MCF 10A (cell line): ENCODE measurements at regions of chr5 and their contacts with region 1.

Region 1: GRCh38 chr5:169583424-169584204 is at the start of gene SPDL1:
- DNase-seq: peak; percentile 98
- H3K4me3 Mint-ChIP-seq: peak within 1 kb of the TSS; percentile 97
- H3K27ac Mint-ChIP-seq: peak within 1 kb of the TSS; percentile 98
- H3K4me1 Mint-ChIP-seq: peaks cover 30% of the 10 kb centered on the region
- H3K27me3 Mint-ChIP-seq: no peaks in the 10 kb centered on the region
- CTCF ChIP-seq: no peak
- total RNA-seq, gene SPDL1: 40.6 and 51.3 TPM in 2 replicates

Region 2: GRCh38 chr5:168579488-168580226 is 1004.0 kb before region 1 on chr5:
- CTCF ChIA-PET with region 1: no interaction called
- POLR2A ChIA-PET with region 1: no interaction called
- intact Hi-C with region 1: loop called (anchors 5 kb)
- DNase-seq: peak; percentile 100
- H3K4me3 Mint-ChIP-seq: peak overlapping the region; percentile 83
- H3K27ac Mint-ChIP-seq: peak overlapping the region; percentile 96
- H3K4me1 Mint-ChIP-seq: peaks cover 28% of the 10 kb centered on the region
- H3K27me3 Mint-ChIP-seq: no peaks in the 10 kb centered on the region
- CTCF ChIP-seq: no peak

Region 3: GRCh38 chr5:168706655-168707069 is 877.0 kb before region 1 on chr5:
- CTCF ChIA-PET with region 1: interaction called, 29 read pairs
- POLR2A ChIA-PET with region 1: interaction called, 3 read pairs
- intact Hi-C with region 1: loop called (anchors 1 kb)
- DNase-seq: peak; percentile 60
- H3K4me3 Mint-ChIP-seq: no peak overlapping the region
- H3K27ac Mint-ChIP-seq: no peak overlapping the region
- H3K4me1 Mint-ChIP-seq: no peaks in the 10 kb centered on the region
- H3K27me3 Mint-ChIP-seq: no peaks in the 10 kb centered on the region
- CTCF ChIP-seq: peak; percentile 53

Region 4: GRCh38 chr5:169265888-169266287 is 317.7 kb before region 1 on chr5:
- CTCF ChIA-PET with region 1: interaction called, 12 read pairs
- POLR2A ChIA-PET with region 1: no interaction called
- intact Hi-C with region 1: no loop called
- DNase-seq: peak; percentile 50
- H3K4me3 Mint-ChIP-seq: no peak overlapping the region
- H3K27ac Mint-ChIP-seq: no peak overlapping the region
- H3K4me1 Mint-ChIP-seq: no peaks in the 10 kb centered on the region
- H3K27me3 Mint-ChIP-seq: no peaks in the 10 kb centered on the region
- CTCF ChIP-seq: peak; percentile 39

Region 5: DNA sequence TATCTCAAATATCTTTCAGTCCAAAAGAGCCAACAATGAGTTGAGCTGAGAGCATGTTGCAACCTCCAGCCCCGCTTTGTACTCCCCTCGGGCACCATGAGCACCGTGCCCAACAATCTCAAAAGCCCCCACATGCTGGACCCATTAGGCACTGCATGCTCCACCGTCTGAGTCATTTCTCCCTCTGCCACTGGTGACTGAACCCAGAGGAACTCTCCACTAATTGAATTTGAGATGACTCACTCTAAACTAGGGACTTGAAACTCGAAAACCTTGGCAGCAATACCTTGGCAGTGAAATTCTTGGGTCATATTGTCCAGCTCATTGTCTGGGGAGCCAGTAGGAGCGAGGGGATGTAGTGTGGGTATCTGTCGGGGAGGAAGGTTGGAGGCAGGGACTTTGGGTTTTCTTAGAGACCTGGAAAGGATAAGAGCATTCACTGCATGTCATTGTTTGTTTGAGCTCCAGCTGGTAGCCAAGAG is 232.8 kb before region 1 on chr5:
- CTCF ChIA-PET with region 1: interaction called, 3 read pairs
- POLR2A ChIA-PET with region 1: interaction called, 3 read pairs
- intact Hi-C with region 1: loop called (anchors 5 kb)
- DNase-seq: peak; percentile 100
- H3K4me3 Mint-ChIP-seq: peak overlapping the region; percentile 49
- H3K27ac Mint-ChIP-seq: peak overlapping the region; percentile 75
- H3K4me1 Mint-ChIP-seq: peaks cover 53% of the 10 kb centered on the region
- H3K27me3 Mint-ChIP-seq: no peaks in the 10 kb centered on the region
- CTCF ChIP-seq: no peak

Region 6: DNA sequence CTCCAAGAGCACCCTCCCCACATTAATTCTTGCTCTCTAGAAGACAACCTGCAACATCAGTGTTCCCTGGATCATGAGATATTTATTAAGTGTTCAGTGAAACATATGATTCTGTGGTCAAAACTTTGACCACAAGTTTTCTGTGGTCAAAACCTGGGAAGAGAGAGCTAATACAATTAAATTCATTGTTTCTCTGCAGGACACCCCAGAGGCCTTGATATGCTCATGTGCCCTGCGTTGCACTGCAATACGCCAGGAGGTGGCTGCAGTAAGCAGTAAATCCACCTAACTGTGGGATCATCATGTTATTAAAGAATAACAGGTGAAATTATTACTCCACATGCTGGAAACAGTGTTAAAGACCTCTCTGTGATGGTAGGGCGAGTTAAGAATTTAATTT is 109.4 kb before region 1 on chr5:
- CTCF ChIA-PET with region 1: no interaction called
- POLR2A ChIA-PET with region 1: no interaction called
- intact Hi-C with region 1: no loop called
- DNase-seq: no peak
- H3K4me3 Mint-ChIP-seq: no peak overlapping the region
- H3K27ac Mint-ChIP-seq: no peak overlapping the region
- H3K4me1 Mint-ChIP-seq: no peaks in the 10 kb centered on the region
- H3K27me3 Mint-ChIP-seq: no peaks in the 10 kb centered on the region
- CTCF ChIP-seq: no peak

Region 7: GRCh38 chr5:169567079-169567478 is 16.5 kb before region 1 on chr5:
- CTCF ChIA-PET with region 1: interaction called, 34 read pairs
- POLR2A ChIA-PET with region 1: interaction called, 4 read pairs
- intact Hi-C with region 1: no loop called
- DNase-seq: peak; percentile 57
- H3K4me3 Mint-ChIP-seq: no peak overlapping the region
- H3K27ac Mint-ChIP-seq: no peak overlapping the region
- H3K4me1 Mint-ChIP-seq: no peaks in the 10 kb centered on the region
- H3K27me3 Mint-ChIP-seq: peaks cover 37% of the 10 kb centered on the region
- CTCF ChIP-seq: no peak

Region 8: GRCh38 chr5:169650701-169651331 is 67.2 kb after region 1 on chr5:
- CTCF ChIA-PET with region 1: no interaction called
- POLR2A ChIA-PET with region 1: no interaction called
- intact Hi-C with region 1: no loop called
- DNase-seq: peak; percentile 18
- H3K4me3 Mint-ChIP-seq: no peak overlapping the region
- H3K27ac Mint-ChIP-seq: no peak overlapping the region
- H3K4me1 Mint-ChIP-seq: peaks cover 7% of the 10 kb centered on the region
- H3K27me3 Mint-ChIP-seq: no peaks in the 10 kb centered on the region
- CTCF ChIP-seq: no peak

Region 9: GRCh38 chr5:169695919-169696490 is 112.4 kb after region 1 on chr5:
- CTCF ChIA-PET with region 1: interaction called, 3 read pairs
- POLR2A ChIA-PET with region 1: interaction called, 3 read pairs
- intact Hi-C with region 1: loop called (anchors 1 kb)
- DNase-seq: peak; percentile 89
- H3K4me3 Mint-ChIP-seq: peak overlapping the region; percentile 46
- H3K27ac Mint-ChIP-seq: peak overlapping the region; percentile 14
- H3K4me1 Mint-ChIP-seq: peaks cover 39% of the 10 kb centered on the region
- H3K27me3 Mint-ChIP-seq: no peaks in the 10 kb centered on the region
- CTCF ChIP-seq: no peak